ENCODE measurements at regions of chr9 and their contacts with region 1.

Region 1: DNA sequence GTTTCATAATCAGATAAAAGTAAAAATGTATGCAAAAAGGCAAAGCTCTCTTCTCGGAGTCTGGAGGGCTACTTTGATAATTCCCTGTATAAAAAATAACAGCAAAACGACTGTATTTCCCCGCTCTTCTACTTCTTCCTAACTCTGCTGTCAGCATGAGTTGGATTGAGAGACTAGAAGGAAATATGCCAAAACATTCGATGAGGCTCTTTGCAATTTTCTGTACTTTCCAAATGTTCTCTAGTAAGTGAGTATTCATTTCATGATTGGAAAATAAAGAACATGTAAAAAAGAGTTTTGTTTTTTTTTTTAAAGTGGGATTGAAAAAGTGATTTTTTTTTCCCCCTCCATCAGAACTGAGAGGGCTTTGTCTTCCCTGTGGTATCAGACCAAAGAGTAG is 677.5 kb downstream of the ACTL7B start:
- DNase-seq: no peak
- H3K4me3 ChIP-seq: no peak overlapping the region
- H3K27ac ChIP-seq: no peak overlapping the region
- H3K4me1 ChIP-seq: no peaks in the 10 kb centered on the region
- H3K27me3 ChIP-seq: no peaks in the 10 kb centered on the region
- CTCF ChIP-seq: no peak
- POLR2A ChIP-seq: no peak

Region 2: DNA sequence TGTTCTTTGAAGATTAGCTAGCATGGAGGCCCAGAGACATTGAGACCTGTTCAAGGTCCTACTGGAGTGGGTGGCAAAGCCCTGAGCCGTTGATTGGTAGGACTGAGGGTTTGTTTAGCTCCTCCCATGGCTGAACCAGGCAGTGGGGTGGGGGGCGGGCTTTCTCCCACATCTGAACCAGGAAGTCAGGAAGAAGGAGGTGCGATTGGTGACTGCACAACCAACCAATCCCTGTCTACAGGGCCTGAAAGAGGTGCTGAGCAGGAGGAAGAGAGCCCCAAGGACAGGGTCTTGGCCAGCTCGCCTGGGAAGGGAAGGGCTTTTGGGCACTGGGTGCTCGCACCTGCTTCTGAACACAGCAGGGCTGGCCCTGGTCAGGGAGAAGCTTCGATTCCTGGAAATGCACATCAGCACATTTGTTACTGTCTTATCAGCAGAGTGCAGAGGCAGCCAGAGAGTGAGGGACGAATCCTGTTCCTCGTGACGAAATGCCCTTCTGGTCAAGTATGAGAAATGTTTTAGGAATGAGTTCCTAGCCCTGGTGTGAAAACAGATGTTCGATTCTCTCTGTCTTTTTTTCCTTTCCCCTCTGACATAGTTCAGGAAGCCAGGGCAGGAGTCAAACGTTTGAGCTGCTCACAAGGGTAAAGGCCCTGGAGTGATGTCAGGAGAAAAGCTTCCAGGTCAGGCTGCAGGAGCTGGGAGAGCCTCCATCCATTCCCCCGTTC is 393.9 kb before region 1 on chr9:
- intact Hi-C with region 1: loop called (anchors 5 kb)
- DNase-seq: no peak
- H3K4me3 ChIP-seq: no peak overlapping the region
- H3K27ac ChIP-seq: peak overlapping the region in 1 of 2 donors; percentile 68
- H3K4me1 ChIP-seq: no peaks in the 10 kb centered on the region
- H3K27me3 ChIP-seq: no peaks in the 10 kb centered on the region
- CTCF ChIP-seq: no peak
- POLR2A ChIP-seq: no peak

Region 3: GRCh38 chr9:108117795-108118194 is 60.5 kb before region 1 on chr9:
- intact Hi-C with region 1: no loop called
- DNase-seq: no peak
- H3K4me3 ChIP-seq: no peak overlapping the region
- H3K27ac ChIP-seq: no peak overlapping the region
- H3K4me1 ChIP-seq: no peaks in the 10 kb centered on the region
- H3K27me3 ChIP-seq: no peaks in the 10 kb centered on the region
- CTCF ChIP-seq: no peak
- POLR2A ChIP-seq: no peak